G401 (cell line): ENCODE measurements at regions of chr2 and their contacts with region 1.

Region 1: DNA sequence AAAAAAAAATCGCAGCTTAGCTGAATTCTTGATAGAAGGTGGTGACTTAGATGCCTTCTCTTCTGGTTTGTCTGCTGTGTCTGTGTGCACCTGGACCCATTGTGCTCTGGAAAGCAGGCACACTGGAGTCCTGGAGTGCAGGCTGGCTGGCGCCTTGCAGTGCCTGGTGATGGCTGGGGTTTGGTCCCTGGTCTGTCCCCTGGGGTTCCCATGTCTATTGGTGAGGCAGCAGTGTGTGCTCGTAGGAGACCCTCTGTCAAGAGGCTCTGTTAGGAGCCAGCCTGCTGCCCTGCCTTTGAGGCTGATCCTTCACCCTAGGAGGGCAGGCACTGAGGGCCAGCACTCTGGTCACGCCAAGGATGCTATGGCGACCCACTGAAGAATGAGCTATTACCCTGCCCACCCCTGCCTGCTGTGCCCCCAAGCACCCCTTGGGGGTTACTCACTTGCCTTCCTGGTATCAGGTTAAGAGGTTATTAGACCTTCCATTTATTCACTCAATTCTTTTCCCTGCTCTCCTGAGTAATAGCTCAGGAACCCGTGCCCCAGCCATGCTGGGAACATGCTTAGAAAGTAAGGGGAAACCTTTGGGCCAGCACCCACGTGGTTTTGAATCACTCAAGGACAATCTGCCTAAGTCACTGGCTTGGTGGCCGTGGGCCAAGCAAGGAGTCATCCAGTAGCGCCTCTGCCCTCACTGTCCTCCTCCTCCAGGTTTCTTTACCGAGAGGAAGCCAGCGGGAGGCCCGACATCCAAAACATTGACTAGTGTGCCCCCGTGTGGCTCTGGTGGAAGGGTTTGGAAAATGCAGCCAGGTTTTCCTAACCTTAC is 284.5 kb downstream of the PRKCE start:
- DNase-seq: peak; percentile 90

Region 2: DNA sequence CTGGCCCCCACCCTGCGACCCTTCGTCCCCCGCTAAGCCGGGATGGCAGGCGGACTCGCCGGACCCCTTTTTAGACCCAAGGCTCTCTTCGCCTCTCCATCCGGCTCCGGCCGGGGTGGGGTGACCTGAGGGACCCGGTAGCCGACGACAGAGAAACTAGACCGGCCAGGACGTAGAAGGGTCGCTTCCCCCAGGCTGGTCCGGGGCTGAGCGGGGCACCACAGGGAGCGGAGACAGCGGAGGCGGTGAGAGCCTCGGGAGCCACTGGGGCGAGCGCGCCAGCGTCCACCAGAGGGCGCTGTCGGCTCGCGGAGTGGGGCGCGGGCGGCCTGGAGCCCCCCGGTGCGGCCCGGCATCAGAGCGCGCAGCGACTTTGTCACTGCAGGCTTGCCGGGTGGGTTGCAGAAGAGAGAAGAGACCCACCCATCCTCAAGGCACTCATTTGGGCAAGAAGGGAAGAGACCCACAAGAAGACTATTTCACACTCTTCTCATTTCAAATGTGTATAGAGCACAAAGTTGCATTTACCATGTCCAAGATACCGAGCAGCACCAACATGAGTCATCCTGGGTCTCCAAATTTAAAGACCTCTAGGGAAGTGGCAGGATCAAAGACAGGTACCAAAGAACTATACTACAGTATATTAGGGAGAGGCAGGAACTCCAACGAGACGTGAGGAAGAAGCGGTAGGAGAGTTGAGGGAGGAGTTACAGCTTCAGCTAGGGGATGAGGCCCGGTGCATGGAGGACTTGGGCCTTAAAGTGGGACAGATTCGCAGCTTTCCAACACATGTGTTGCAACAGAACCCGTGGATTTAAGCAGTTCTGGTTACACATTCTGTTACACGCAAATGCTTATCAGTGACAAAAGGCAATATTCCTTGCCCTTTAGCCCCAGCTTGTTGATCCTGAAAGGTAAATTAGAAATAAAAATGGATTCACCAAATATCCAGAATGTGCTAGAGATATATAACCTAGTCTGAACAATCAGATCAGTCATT is 292.2 kb before region 1 on chr2:
- in situ Hi-C with region 1: loop called (anchors 25 kb)
- DNase-seq: peak; percentile 58

Region 3: GRCh38 chr2:45904267-45904945 is 31.6 kb before region 1 on chr2:
- in situ Hi-C with region 1: no loop called
- DNase-seq: no peak

Region 4: GRCh38 chr2:45992021-45992740 is 56.2 kb after region 1 on chr2:
- in situ Hi-C with region 1: no loop called
- DNase-seq: no peak